Stomach (tissue), 19 donors: ENCODE measurements at regions of chr2 and their contacts with region 1.

Region 1: DNA sequence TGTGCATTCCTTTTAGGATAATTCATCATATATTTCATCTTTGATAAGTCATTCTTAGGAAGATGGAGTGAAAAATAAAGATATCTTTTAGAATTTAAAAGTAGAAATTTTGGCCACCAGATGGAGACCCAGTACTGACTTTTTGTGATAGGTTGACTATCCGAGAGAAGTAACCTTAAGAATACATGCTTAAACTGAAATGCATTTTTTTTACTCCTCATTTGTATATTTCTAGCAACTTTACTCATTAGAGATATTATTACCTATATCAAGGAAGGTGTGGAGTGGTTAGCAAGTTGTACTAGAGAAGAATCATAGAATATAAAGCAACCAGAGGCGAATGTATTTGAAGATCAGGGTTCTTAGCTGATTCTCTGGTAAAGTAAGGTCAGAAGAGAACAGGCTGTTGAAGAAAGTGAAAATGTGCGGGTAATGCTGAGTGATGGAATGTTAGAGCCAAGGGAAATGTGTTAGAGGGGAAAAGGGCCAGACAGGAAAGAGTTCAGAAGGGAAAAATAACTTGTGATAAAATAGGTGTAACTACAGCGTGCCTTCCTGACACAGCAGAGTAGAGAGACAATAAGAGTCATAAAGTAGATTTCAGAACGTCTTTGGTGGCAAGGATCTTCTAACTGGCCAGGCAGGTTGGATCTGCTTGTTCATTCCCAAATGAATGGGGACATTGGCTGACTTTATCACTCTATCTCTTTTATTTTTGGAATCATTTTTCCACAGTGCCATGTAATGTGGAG is 52.3 kb downstream of the TDRD15 start:
- DNase-seq: peak in 1 of 2 donors; percentile 41
- H3K4me3 ChIP-seq: no peak overlapping the region
- H3K27ac ChIP-seq: no peak overlapping the region
- H3K4me1 ChIP-seq: no peaks in the 10 kb centered on the region
- H3K27me3 ChIP-seq: no peaks in the 10 kb centered on the region
- CTCF ChIP-seq: no peak
- EP300 ChIP-seq: no peak
- POLR2A ChIP-seq: no peak

Region 2: DNA sequence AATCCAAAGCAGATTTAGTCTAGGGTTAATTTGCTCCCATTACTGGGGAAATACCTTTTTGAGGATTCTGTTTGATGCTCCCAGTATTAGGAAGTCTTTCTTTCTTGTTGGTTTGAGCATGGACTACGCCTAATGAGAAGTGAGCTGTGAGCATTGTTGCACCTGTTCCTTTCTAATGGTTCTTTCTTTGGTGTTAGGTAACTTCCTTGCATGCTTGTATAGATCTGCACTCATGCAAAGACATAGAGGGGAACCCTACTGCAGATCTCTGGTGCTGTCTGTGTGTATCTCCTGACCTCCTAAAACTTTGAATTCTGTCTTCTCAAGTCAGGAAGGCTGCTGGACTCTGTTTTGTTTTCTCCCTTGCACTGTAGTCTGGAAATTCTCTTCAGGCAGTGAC is 65.1 kb before region 1 on chr2:
- intact Hi-C with region 1: no loop called
- DNase-seq: no peak
- H3K4me3 ChIP-seq: no peak overlapping the region
- H3K27ac ChIP-seq: no peak overlapping the region
- H3K4me1 ChIP-seq: no peaks in the 10 kb centered on the region
- H3K27me3 ChIP-seq: no peaks in the 10 kb centered on the region
- CTCF ChIP-seq: no peak
- EP300 ChIP-seq: no peak
- POLR2A ChIP-seq: no peak

Region 3: DNA sequence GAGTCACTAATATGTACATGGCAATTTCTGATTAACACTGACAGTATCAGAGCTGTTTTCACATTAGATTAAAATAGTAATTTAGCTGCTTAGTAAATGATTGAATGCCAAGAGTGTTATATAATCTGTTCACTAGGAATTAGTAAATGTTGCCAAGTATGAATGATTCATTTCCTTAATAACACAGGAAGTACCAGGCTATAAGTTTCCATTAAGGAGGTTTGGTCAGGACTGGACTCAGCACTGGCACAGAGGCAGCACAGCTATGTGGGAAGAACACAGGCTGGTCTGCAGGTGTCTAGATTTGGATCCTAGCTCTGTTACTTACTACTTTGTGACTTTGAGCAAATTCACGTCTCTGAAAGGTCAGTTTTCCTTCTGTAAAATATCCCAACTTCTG is 44.9 kb after region 1 on chr2:
- intact Hi-C with region 1: no loop called
- DNase-seq: peak in 1 of 2 donors; percentile 25
- H3K4me3 ChIP-seq: no peak overlapping the region
- H3K27ac ChIP-seq: no peak overlapping the region
- H3K4me1 ChIP-seq: peaks cover 0 to 4% (median 0%) of the 10 kb centered on the region in 4 donors
- H3K27me3 ChIP-seq: no peaks in the 10 kb centered on the region
- CTCF ChIP-seq: no peak
- EP300 ChIP-seq: no peak
- POLR2A ChIP-seq: no peak

Region 4: GRCh38 chr2:21317131-21317530 is 141.1 kb after region 1 on chr2:
- intact Hi-C with region 1: loop called (anchors 10 kb)
- DNase-seq: peak; percentile 50 to 67
- H3K4me3 ChIP-seq: no peak overlapping the region
- H3K27ac ChIP-seq: no peak overlapping the region
- H3K4me1 ChIP-seq: no peaks in the 10 kb centered on the region
- H3K27me3 ChIP-seq: no peaks in the 10 kb centered on the region
- CTCF ChIP-seq: peak in 5 of 7 experiments; percentile 38 to 85 (median 57)
- EP300 ChIP-seq: no peak
- POLR2A ChIP-seq: no peak

Region 5: DNA sequence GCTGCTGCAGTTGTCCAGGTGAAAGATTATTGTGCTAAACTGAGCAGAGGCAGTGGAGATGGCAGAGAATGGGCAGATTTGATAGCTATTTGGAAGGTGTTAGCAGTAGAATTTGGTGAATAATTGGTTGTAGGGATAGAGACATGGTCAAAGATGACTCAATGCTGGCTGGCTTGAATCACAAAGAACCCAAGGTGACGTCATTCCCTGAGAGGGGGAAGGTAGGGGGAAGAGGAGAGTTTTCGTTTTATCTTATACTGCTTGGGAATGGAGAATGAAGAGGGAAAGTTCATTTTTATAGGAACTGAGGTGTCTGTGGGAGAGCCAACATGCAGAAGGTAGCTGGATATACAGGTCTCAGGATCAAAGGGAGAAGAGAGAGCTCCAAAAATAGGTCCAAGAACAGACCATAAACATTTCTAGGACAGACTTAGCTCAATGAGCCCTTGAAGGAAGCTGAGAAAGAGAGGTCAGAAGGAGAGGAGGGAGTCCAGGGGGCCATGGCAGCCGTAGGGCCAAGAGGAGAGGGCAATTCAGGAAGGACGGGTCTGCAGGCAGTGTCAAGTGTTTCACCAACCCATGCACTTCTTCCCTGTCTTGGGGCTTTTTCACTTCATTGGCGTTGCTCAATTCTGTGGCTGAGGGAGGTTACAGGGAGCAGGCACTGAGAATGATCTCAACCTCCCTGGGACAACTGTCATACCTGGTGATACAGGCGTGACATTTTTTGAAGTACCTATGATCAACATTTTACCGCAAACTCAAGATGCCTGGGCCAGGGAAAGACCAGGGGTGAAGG is 229.0 kb after region 1 on chr2:
- intact Hi-C with region 1: no loop called
- DNase-seq: no peak
- H3K4me3 ChIP-seq: no peak overlapping the region
- H3K27ac ChIP-seq: no peak overlapping the region
- H3K4me1 ChIP-seq: no peaks in the 10 kb centered on the region
- H3K27me3 ChIP-seq: no peaks in the 10 kb centered on the region
- CTCF ChIP-seq: no peak
- EP300 ChIP-seq: no peak
- POLR2A ChIP-seq: no peak

Region 6: DNA sequence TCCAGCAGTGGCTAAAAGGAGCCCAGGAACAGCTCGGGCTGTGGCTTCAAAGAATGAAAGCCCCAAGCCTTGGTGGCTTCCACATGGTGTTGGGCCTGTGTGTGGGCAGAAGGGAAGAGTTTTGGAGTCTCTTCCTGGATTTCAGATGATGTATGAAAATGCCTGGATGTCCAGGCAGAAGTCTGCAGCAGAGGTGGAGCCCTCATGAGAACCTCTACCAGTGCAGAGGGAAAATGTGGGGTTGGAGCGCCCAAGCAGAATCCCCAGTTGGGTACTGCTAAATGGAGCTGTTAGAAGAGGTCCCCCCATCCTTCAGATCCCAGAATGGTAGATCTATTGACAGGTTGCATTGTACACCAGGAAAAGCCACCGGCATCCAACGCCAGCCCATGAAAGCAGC is 359.8 kb after region 1 on chr2:
- intact Hi-C with region 1: no loop called
- DNase-seq: no peak
- H3K4me3 ChIP-seq: no peak overlapping the region
- H3K27ac ChIP-seq: no peak overlapping the region
- H3K4me1 ChIP-seq: no peaks in the 10 kb centered on the region
- H3K27me3 ChIP-seq: no peaks in the 10 kb centered on the region
- CTCF ChIP-seq: no peak
- EP300 ChIP-seq: no peak
- POLR2A ChIP-seq: no peak